H1 (cell line): ENCODE measurements at regions of chr12 and their contacts with region 1.

Region 1: DNA sequence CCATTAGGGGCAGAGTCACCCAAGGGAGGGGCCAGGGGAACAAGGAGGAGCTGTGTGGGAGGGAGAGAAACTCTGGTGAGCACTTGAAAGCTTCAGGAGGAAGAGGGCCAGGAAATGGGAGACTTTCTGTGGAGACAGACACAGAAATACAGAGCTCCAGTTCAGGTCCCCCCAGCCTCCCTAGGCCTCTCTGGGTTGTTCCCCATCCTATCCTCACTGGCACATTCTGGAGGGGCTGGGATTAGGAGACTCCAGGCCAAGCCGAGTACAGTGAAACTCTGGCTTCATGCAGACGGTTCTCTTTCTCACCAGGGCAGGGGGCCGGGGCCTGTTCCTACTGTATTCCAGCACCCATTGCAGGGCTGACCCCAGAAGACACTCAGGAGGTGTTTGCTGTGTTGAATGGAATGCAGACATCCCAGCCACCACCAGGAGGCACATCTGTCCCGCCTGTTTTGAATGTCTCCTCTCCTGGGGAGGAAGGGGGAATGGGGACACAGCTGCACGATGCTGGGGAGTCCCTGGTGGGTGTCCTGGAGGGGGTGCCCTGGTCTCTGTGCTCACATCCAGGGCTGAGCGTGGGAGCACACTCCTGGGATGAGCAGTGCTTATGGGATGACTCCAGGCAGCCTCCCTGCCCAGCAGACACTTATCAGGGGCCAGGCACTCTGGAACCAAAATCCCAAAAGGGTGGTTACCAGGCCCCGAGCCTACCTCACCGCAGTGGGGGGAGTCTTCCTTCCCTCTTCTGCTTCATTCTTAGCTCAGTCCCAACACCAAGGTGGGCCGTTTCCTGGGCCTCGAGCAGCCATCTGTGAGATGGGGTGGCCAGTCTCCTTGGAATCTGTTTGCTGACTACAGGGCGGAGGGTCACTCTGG is 5.5 kb upstream of the KRT84 start:
- DNase-seq: peak in 1 of 2 experiments; percentile 66
- H3K4me3 ChIP-seq: no peak overlapping the region
- H3K27ac ChIP-seq: no peak overlapping the region
- H3K4me1 ChIP-seq: peaks cover 0 to 7% (median 1%) of the 10 kb centered on the region in 4 experiments; a peak in 2 of 7 replicates
- H3K27me3 ChIP-seq: peaks cover 0 to 4% (median 0%) of the 10 kb centered on the region in 4 experiments; a peak in 1 of 7 replicates
- CTCF ChIP-seq: peak; percentile 83 to 91 (median 84)
- EP300 ChIP-seq: no peak
- POLR2A ChIP-seq: no peak
- RAD21 ChIP-seq: peak; percentile 73 to 74

Region 2: GRCh38 chr12:51959211-51959610 is 431.8 kb before region 1 on chr12:
- CTCF ChIA-PET with region 1: no interaction called
- POLR2A ChIA-PET with region 1: no interaction called
- DNase-seq: no peak
- H3K4me3 ChIP-seq: no peak overlapping the region
- H3K27ac ChIP-seq: no peak overlapping the region
- H3K4me1 ChIP-seq: no peaks in the 10 kb centered on the region
- H3K27me3 ChIP-seq: no peaks in the 10 kb centered on the region
- CTCF ChIP-seq: no peak
- EP300 ChIP-seq: no peak
- POLR2A ChIP-seq: no peak
- RAD21 ChIP-seq: no peak

Region 3: DNA sequence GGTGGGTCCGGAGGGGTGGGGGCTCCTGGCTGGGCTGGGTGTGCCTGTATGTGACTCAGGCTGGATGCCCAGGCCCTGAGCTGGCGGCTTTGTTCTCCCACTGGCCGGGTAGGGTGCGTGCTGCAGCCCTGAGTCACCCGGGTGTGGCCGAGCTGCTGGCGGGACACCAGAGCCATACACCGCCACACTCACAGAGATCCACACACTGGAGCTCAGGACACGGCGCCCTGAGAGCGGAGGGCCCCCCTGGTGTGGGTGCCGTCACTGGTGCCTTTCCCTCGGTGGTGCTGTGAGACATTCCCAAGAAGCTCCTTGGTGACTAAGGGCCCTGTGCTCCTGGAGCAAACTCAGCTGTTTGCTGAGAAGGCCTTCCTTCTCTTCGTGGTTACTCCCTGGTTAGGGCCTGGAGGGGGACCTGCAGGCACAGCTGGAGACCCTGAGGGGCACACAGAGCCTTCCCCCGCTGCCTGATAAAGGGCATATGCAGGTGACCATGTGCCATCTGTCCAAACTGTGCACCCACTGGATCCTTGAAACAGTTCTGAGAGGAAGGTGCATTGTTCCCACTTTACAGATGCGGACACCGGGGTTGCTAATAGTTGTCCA is 243.5 kb before region 1 on chr12:
- CTCF ChIA-PET with region 1: interaction called, 13 read pairs
- POLR2A ChIA-PET with region 1: no interaction called
- DNase-seq: no peak
- H3K4me3 ChIP-seq: no peak overlapping the region
- H3K27ac ChIP-seq: peak overlapping the region; percentile 73
- H3K4me1 ChIP-seq: peaks cover 8 to 44% (median 19%) of the 10 kb centered on the region in 4 experiments
- H3K27me3 ChIP-seq: no peaks in the 10 kb centered on the region; a peak in 1 of 7 replicates
- CTCF ChIP-seq: no peak
- EP300 ChIP-seq: no peak
- POLR2A ChIP-seq: no peak
- RAD21 ChIP-seq: no peak

Region 4: DNA sequence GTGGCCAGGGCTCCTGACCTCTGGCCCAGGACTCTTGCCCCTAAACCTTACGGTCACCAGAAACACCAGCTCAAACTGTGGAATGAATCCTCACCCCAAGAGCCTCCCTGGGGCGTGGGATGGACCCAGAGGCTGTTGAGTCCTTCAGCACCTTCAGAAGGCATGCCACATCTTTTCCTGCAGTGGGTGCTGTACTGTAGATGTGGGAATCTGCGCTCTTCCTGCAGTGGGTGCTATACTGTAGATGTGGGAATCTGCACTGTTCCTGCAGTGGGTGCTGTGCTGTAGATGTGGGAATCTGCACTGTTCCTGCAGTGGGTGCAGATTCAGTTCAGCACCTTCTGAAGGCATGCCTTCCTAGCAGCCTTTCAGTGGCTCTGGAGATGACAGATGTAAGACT is 14.0 kb after region 1 on chr12:
- CTCF ChIA-PET with region 1: interaction called, 36 read pairs
- POLR2A ChIA-PET with region 1: no interaction called
- DNase-seq: no peak
- H3K4me3 ChIP-seq: no peak overlapping the region
- H3K27ac ChIP-seq: no peak overlapping the region
- H3K4me1 ChIP-seq: peaks cover 0 to 5% (median under 1%) of the 10 kb centered on the region in 4 experiments; a peak in 1 of 7 replicates
- H3K27me3 ChIP-seq: no peaks in the 10 kb centered on the region; a peak in 1 of 7 replicates
- CTCF ChIP-seq: no peak; a peak in 1 of 4 replicates
- EP300 ChIP-seq: no peak
- POLR2A ChIP-seq: no peak
- RAD21 ChIP-seq: no peak

Region 5: DNA sequence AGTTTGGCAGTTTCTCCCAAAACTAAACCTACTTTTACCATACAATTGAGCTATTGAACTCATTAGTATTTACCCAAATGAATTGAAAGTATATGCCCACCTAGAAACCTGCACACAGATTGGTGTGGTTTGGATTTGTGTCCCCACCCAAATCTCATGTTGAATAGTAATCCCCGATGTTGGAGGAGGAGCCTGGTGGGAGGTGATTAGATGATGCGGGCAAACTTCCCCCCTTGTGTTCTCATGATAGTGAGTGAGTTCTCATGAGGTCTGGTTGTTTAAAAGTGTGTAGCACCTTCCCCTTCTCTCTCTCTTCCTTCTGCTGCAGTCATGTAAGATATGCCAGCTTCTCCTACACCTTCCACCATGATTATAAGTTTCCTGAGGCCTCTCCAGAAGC is 86.7 kb after region 1 on chr12:
- CTCF ChIA-PET with region 1: interaction called, 13 read pairs
- POLR2A ChIA-PET with region 1: no interaction called
- DNase-seq: no peak
- H3K4me3 ChIP-seq: no peak overlapping the region
- H3K27ac ChIP-seq: no peak overlapping the region
- H3K4me1 ChIP-seq: no peaks in the 10 kb centered on the region
- H3K27me3 ChIP-seq: no peaks in the 10 kb centered on the region
- CTCF ChIP-seq: no peak
- EP300 ChIP-seq: no peak
- POLR2A ChIP-seq: no peak
- RAD21 ChIP-seq: no peak

Region 6: GRCh38 chr12:52539083-52539820 is 148.3 kb after region 1 on chr12:
- CTCF ChIA-PET with region 1: interaction called, 27 read pairs
- POLR2A ChIA-PET with region 1: no interaction called
- DNase-seq: no peak
- H3K4me3 ChIP-seq: no peak overlapping the region
- H3K27ac ChIP-seq: no peak overlapping the region
- H3K4me1 ChIP-seq: no peaks in the 10 kb centered on the region
- H3K27me3 ChIP-seq: no peaks in the 10 kb centered on the region
- CTCF ChIP-seq: no peak
- EP300 ChIP-seq: no peak
- POLR2A ChIP-seq: no peak
- RAD21 ChIP-seq: no peak

Region 7: DNA sequence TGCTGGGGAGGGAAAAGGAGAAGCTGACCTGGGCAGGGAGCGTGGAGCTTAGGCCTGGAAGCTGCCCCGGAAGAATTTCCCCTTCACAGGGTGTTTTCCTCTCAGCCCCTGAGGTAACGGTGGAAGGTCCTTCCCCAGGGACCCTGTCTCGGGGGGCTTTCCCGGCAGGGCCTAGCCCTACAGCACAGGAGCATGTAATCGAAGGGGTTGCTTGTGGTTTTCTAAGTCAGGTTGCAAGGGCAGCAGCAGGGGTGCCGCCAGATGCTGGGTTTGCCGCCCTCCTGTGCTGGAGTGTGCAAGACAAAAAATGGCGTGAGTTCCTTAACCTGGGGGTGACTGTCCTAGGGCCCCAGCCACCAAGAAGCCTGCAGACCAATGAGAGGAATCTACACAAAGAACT is 184.3 kb after region 1 on chr12:
- CTCF ChIA-PET with region 1: interaction called, 24 read pairs
- POLR2A ChIA-PET with region 1: no interaction called
- DNase-seq: no peak
- H3K4me3 ChIP-seq: no peak overlapping the region
- H3K27ac ChIP-seq: no peak overlapping the region
- H3K4me1 ChIP-seq: no peaks in the 10 kb centered on the region
- H3K27me3 ChIP-seq: no peaks in the 10 kb centered on the region; a peak in 1 of 7 replicates
- CTCF ChIP-seq: no peak
- EP300 ChIP-seq: no peak
- POLR2A ChIP-seq: no peak
- RAD21 ChIP-seq: no peak

Region 8: GRCh38 chr12:52870351-52871290 is 479.6 kb after region 1 on chr12:
- CTCF ChIA-PET with region 1: interaction called, 11 read pairs
- POLR2A ChIA-PET with region 1: interaction called, 3 read pairs
- DNase-seq: peak in 1 of 2 experiments; percentile 98
- H3K4me3 ChIP-seq: no peak overlapping the region
- H3K27ac ChIP-seq: no peak overlapping the region
- H3K4me1 ChIP-seq: no peaks in the 10 kb centered on the region; a peak in 4 of 7 replicates
- H3K27me3 ChIP-seq: peaks cover 0 to 22% (median 12%) of the 10 kb centered on the region in 4 experiments; a peak in 5 of 7 replicates
- CTCF ChIP-seq: peak; percentile 86 to 98 (median 90)
- EP300 ChIP-seq: no peak
- POLR2A ChIP-seq: no peak
- RAD21 ChIP-seq: peak; percentile 96 to 98